Dorsolateral prefrontal cortex (tissue), 120 donors: ENCODE measurements at regions of chr5 and their contacts with region 1.

Region 1: DNA sequence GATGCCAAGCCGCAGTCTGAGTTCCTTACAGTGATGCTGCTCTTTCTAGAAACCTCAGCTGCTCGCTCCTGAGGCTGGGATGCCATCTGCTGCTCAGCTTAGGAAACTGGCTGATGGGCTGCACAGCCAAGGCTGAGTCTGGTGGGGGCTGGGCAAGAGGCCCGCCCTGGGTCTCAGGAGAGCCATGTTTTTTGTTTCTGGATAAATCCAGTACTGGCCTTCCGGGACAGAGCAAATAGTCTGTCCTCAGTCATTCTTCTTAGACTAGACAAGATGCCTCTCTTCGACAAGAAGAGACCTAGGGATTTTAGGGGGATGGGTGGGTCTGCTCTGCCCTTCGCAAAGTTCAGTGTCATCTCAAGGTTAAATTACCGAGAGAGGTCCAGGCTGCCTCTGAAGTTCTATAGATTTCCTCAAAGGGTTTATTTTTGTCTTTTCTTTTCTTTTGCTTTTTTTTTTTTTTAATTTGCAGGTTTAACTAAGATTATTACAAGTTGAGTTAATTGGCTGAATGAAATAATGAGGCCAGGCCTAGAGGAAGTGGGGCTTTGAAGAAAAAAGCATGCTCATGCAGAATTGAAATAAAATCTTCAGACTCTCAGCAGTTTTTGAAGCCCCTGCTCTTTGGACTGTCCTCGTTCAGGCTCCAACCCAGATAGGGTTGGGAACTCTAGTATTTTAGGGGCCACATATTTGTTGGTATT is 30.6 kb upstream of the MATR3 start:
- DNase-seq: peak; percentile 78 to 94 (median 90)
- H3K4me3 ChIP-seq: peak overlapping the region in 4 of 59 donors; percentile 1 to 26 (median 16)
- H3K27ac ChIP-seq: peak overlapping the region in 56 of 59 donors; percentile 7 to 97 (median 71)
- H3K27me3 ChIP-seq: no peaks in the 10 kb centered on the region
- CTCF ChIP-seq: peak; percentile 64 to 99 (median 95)

Region 2: DNA sequence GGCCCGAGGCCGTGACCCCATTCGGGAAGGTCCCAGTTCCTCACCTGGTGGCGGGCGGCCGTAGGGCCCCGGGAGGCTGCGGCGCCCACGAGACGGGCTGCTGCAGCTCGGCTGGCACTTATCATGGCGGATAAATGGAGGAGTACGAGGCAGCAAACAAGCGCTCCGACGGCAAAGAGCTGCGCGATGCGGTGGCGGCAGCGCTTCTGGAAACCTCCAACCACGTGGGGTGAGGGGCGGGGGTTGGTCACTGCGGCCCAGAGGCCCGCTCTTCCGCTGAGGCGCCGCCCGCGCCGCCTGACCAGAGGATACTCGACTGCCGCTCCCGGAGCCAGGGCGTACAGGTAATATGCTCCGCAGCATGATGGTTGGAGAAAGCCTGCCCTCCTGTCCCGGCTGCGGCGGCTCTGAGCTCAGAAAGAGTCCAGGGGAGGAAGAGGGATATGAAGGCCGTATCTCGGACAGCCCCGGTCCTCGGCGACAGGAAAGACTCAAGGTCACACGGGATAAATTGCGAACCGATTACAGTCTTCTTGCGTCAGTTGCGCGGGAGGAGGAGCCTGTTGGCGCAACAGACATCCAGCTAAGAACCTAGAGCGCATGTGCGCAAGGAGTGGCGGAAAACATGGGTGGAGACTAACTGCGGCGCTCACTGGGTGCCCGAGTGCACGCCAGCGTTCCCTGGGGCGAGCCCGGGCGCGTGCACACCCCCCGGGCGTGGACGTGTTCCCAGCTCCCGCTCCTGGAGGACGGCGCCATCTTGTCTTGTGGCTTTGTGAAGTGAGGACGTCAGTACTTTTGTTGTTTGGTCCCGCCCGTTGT is 687.5 kb before region 1 on chr5 and contains the start of gene HSPA9:
- intact Hi-C with region 1: loop called (anchors 2 to 5 kb)
- DNase-seq: peak; percentile 97 to 99 (median 98)
- H3K4me3 ChIP-seq: peak within 1 kb of the TSS; percentile 74 to 100 (median 98)
- H3K27ac ChIP-seq: peak within 1 kb of the TSS; percentile 94 to 100 (median 100)
- H3K27me3 ChIP-seq: no peaks in the 10 kb centered on the region
- CTCF ChIP-seq: peak in 38 of 56 donors; percentile 8 to 50 (median 22)
- total RNA-seq, gene HSPA9: 167 to 280 (median 215) TPM

Region 3: DNA sequence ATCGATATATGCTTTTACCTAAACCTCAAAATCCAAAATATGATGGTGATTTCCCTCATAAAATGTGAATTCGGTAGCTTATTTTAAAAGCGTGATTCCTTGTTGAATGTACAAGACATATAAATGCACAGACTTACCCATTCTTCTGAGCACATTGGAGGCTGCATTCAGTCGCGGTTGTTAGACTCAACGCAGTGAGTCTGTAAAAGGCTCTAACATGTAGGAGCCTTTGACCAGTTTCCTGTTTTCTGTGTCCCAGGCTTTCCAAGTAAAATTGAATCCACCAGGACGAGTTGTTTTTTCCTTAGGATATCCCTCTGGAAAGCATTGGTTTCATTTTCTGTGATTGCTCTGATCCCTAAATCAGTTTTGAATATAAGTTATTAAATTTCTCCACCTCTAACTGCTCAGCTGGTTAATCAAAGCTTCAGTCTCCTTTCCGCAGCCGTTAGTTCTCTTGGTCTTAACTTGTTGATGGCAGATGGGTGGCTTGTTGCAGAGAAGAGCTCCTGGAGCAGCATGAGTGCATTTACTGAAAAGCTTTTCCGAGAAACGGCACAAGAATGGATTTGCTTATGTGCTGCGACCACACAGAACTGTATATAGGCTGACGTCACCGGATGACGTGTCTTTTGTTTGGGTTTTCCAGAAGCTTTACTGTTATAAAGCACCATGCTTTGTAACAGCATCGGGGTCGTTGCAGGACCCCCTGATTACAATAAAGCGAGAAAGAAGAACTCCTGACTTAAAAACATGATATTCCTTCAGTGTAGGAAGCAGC is 387.9 kb before region 1 on chr5 and contains the start of gene LRRTM2:
- intact Hi-C with region 1: loop called (anchors 2 to 5 kb)
- DNase-seq: peak in 9 of 10 donors; percentile 50 to 86 (median 74)
- H3K4me3 ChIP-seq: peak within 1 kb of the TSS; percentile 41 to 88 (median 66)
- H3K27ac ChIP-seq: peak within 1 kb of the TSS; percentile 27 to 95 (median 89)
- H3K27me3 ChIP-seq: no peaks in the 10 kb centered on the region
- CTCF ChIP-seq: peak in 1 of 56 donors; percentile 8
- total RNA-seq, gene LRRTM2: 19.2 to 91.2 (median 65.0) TPM

Region 4: GRCh38 chr5:139091439-139092156 is 171.3 kb before region 1 on chr5:
- intact Hi-C with region 1: loop called (anchors 2 to 5 kb)
- DNase-seq: no peak
- H3K4me3 ChIP-seq: no peak overlapping the region
- H3K27ac ChIP-seq: peak overlapping the region in 11 of 59 donors; percentile 7 to 64 (median 25)
- H3K27me3 ChIP-seq: no peaks in the 10 kb centered on the region
- CTCF ChIP-seq: peak in 49 of 56 donors; percentile 16 to 71 (median 42)